Aorta (tissue), 5 donors: ENCODE measurements at regions of chr22 and their contacts with region 1.

Region 1: GRCh38 chr22:37199103-37199759 is 11.2 kb upstream of the C1QTNF6 start:
- DNase-seq: peak; percentile 99 to 100
- ATAC-seq: peak; percentile 98
- H3K4me3 ChIP-seq: peak overlapping the region; percentile 31 to 51
- H3K27ac ChIP-seq: peak overlapping the region in 1 of 2 donors; percentile 77
- H3K4me1 ChIP-seq: no peaks in the 10 kb centered on the region
- H3K27me3 ChIP-seq: no peaks in the 10 kb centered on the region

Region 2: GRCh38 chr22:37077884-37078485 is 121.2 kb before region 1 on chr22:
- intact Hi-C with region 1: loop called in 1 of 2 experiments (anchors 5 kb)
- DNase-seq: peak; percentile 64 to 86
- ATAC-seq: no peak
- H3K4me3 ChIP-seq: no peak overlapping the region
- H3K27ac ChIP-seq: no peak overlapping the region
- H3K4me1 ChIP-seq: no peaks in the 10 kb centered on the region
- H3K27me3 ChIP-seq: no peaks in the 10 kb centered on the region

Region 3: GRCh38 chr22:37166675-37167066 is 32.6 kb before region 1 on chr22:
- intact Hi-C with region 1: loop called (anchors 1 to 2 kb)
- DNase-seq: peak; percentile 92 to 95
- ATAC-seq: peak; percentile 91
- H3K4me3 ChIP-seq: no peak overlapping the region
- H3K27ac ChIP-seq: no peak overlapping the region
- H3K4me1 ChIP-seq: no peaks in the 10 kb centered on the region
- H3K27me3 ChIP-seq: no peaks in the 10 kb centered on the region

Region 4: GRCh38 chr22:37316875-37317371 is 117.7 kb after region 1 on chr22:
- intact Hi-C with region 1: no loop called
- DNase-seq: peak; percentile 84
- ATAC-seq: peak; percentile 81
- H3K4me3 ChIP-seq: no peak overlapping the region
- H3K27ac ChIP-seq: no peak overlapping the region
- H3K4me1 ChIP-seq: no peaks in the 10 kb centered on the region
- H3K27me3 ChIP-seq: no peaks in the 10 kb centered on the region

Region 5: DNA sequence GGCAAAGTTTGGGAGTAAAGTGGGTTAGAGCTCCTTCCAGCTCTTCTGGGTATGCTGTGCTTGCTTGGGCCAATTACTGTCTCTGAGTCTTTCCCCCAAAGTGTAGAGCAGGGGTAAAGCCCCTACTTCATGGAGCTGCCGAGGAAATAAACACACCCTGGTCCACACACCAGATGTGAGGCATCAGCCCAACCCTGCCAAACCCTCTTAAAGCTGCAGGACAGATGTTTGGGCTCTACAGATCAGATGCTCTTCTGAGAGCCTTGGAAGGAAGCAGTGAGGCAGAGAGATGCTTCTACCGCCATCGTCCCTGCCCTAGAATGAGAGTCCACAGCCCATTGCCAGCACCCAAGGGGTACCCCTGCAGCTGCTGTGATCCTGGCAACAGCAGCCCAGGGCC is 163.4 kb after region 1 on chr22:
- intact Hi-C with region 1: no loop called
- DNase-seq: no peak
- ATAC-seq: no peak
- H3K4me3 ChIP-seq: no peak overlapping the region
- H3K27ac ChIP-seq: no peak overlapping the region
- H3K4me1 ChIP-seq: no peaks in the 10 kb centered on the region
- H3K27me3 ChIP-seq: no peaks in the 10 kb centered on the region